AG04449 (cell line): ENCODE measurements at regions of chr6 and their contacts with region 1.

Region 1: GRCh38 chr6:42547407-42548329 is 16.2 kb upstream of the UBR2 start:
- DNase-seq: no peak
- H3K4me3 ChIP-seq: peak overlapping the region; percentile 55
- CTCF ChIP-seq: peak; percentile 100

Region 2: DNA sequence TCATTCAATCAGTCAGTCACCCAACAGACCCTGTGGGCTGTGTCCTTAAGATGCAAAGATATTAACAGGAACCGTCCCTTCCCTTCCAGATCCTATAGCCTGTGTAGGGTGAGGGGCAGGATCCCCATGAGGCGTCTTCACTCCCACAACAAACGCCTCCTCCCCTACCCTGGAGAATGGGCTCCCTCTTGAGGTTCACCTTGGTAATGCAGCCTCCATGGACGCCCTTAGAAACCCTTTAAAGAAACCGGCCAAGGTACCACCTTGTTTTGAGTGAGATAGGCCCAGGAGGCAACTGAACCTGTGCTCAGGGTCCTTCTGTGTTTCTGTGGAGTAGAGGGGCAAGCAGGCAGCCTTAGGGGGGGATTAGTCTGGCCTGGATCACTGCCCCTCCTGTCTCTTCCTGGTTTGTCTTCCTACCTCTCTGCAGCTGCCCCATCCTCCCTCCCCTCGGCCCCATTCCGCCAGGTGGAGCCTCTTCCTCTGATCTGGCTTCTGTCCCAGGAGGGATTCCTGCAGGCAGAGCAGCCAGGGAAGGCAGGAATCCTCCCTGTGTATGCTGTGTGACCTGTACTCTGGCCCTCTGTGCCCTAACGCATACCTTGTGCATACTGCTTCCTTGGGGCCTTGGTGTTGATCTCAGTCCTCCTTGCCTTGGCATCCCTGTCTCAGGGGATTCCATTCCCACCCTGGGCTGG is 381.1 kb before region 1 on chr6:
- CTCF ChIA-PET with region 1: interaction called, 10 read pairs
- POLR2A ChIA-PET with region 1: no interaction called
- DNase-seq: no peak
- H3K4me3 ChIP-seq: no peak overlapping the region
- CTCF ChIP-seq: peak; percentile 91

Region 3: DNA sequence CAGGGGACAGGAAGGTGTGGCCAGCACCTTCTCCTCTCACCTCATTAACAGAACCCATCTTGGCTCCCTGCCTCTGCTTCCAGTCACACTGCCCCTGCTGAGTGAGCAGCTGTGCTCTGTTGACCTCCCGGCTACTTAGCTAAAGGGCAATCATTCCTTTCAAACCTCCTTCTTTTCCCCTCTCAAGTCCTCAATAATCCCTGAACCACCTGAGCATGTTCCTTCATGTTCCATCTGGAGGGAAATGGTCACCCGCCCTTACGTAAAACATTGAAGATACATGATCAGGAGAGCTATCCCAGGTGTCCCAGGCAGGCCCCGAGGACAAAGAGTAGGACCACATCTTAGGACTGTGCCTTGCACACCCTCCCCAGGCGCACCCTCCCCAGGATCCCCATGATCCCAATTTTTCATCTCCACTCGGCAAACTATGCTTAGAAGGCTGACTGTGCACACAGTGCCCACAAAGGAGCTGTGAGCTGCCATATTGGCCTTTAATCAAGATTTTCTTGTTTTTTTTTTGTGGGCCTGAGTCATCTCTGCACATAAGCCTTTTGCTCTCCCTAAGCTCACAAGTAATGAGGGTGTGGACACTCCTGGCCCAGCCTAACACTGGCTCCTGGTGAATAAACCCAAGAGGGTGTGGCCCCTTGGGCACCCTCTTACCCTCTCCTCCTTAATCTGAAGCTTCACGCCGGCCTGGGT is 308.2 kb before region 1 on chr6:
- CTCF ChIA-PET with region 1: interaction called, 12 read pairs
- POLR2A ChIA-PET with region 1: no interaction called
- DNase-seq: no peak
- H3K4me3 ChIP-seq: no peak overlapping the region
- CTCF ChIP-seq: no peak

Region 4: DNA sequence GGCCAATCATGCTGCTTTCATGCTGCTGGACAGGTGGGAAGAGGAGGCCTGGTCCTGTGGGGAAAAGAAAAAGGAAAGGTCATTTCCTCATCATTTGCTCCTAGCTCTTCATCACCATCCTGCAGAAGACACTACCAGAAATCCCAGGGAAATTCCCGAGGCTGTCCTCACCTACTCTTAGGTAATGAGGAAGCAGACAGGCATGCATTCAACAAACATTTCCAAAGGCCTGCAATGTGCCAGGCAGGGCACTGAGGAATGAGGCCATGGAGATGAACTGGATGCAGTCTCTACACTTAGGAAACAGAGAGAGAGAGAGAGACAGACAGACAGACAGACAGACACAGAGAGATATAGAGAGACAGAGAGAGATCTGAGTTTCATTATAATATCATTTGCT is 247.0 kb before region 1 on chr6:
- CTCF ChIA-PET with region 1: interaction called, 14 read pairs
- POLR2A ChIA-PET with region 1: no interaction called
- DNase-seq: no peak
- H3K4me3 ChIP-seq: no peak overlapping the region
- CTCF ChIP-seq: no peak

Region 5: GRCh38 chr6:42404484-42404883 is 143.2 kb before region 1 on chr6:
- CTCF ChIA-PET with region 1: interaction called, 10 read pairs
- POLR2A ChIA-PET with region 1: no interaction called
- DNase-seq: no peak
- H3K4me3 ChIP-seq: no peak overlapping the region
- CTCF ChIP-seq: no peak

Region 6: GRCh38 chr6:42505377-42505702 is 42.3 kb before region 1 on chr6:
- CTCF ChIA-PET with region 1: interaction called, 29 read pairs
- POLR2A ChIA-PET with region 1: no interaction called
- DNase-seq: peak; percentile 37
- H3K4me3 ChIP-seq: no peak overlapping the region
- CTCF ChIP-seq: no peak

Region 7: GRCh38 chr6:42572523-42572922 is 24.9 kb after region 1 on chr6:
- CTCF ChIA-PET with region 1: interaction called, 171 read pairs
- POLR2A ChIA-PET with region 1: interaction called, 4 read pairs
- DNase-seq: no peak
- H3K4me3 ChIP-seq: no peak overlapping the region
- CTCF ChIP-seq: no peak

Region 8: GRCh38 chr6:42690151-42690702 is 142.6 kb after region 1 on chr6:
- CTCF ChIA-PET with region 1: no interaction called
- POLR2A ChIA-PET with region 1: no interaction called
- DNase-seq: no peak
- H3K4me3 ChIP-seq: no peak overlapping the region
- CTCF ChIP-seq: no peak

Region 9: DNA sequence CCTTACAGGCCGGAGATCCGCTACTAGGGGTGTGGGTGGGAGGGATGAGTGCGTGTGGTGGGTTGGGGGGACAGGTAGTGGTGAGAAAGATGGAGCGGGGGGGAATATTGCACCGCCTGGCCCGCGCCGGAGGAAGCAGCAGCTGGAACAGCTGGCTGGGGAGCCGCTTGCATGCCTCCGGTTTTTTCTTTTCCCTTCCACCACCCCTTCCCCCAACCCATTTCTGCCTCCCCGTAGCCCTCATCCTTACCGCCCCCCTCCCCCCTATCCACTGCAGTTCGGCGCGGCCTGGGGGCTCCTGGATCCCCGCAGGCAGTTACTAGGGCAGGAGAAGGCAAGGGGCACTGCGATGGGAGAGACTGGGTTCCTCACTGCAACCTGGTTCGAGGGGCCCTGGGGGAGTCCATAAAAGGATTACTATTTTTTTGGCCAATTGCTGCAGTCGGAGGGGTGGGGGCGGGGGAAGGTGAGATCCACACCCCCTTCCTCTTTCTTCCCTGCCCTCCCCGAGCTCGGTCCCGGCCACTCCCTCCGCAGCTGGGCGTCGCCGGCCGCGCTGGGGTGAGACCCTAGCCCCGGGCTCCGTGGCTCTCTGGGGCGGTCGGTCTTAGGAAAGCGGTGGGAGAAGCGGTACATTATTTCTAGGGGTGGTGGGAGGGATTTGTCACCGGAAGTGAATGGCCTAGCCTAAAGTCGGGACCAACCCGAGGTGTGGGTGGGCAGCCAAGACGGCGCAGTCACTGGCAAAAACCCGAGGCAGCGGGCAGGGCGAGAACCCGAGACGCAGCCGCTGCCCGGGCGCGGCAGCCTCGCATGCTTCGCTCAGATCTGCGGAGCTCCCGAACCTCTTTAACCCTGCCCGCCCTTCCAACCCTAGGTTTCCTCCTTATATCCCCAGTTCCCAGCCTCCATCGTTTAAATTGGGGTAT is 199.1 kb after region 1 on chr6:
- CTCF ChIA-PET with region 1: no interaction called
- POLR2A ChIA-PET with region 1: no interaction called
- DNase-seq: peak; percentile 60
- H3K4me3 ChIP-seq: peak overlapping the region; percentile 78
- CTCF ChIP-seq: no peak